HEK293 (cell line): ENCODE measurements at regions of chr10 and their contacts with region 1.

Region 1: DNA sequence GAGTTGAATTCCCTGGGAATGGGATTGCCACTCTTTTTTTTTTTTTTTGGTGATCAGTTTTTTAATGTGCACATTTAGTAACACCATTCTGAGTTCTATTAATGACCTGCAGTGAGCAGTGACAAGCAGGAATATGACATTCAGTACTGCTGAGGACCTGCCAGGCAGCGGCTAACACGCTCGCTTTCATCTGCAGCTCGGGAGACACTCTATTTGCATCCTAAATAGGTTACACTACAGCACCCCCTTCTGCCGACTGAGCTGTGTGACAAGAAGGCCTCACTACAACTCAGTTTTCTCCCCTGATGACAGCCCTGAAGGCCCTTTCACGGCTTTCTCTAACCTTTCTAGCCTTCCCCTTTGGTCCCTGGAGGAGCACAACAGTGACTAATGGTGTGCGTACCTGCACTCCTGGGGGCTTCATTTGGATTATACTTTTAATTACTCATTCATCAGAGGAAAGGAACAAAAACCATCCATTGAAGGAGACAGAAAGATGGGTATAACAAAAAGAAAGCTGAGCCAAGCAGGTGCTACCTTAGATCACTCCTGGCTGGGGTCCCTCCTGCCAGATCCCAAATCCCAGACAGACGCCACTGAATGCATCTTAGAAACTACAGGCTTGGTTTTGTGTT is 872.4 kb downstream of the LRMDA start:
- H3K4me3 ChIP-seq: no peak overlapping the region
- H3K27ac ChIP-seq: no peak overlapping the region
- H3K4me1 ChIP-seq: peaks cover 7% of the 10 kb centered on the region
- CTCF ChIP-seq: peak; percentile 54; the same call in 1 of the 2 replicates

Region 2: GRCh38 chr10:76106611-76107010 is 197.2 kb before region 1 on chr10:
- CTCF ChIA-PET with region 1: interaction called, 11 read pairs
- POLR2A ChIA-PET with region 1: no interaction called
- H3K4me3 ChIP-seq: no peak overlapping the region
- H3K27ac ChIP-seq: no peak overlapping the region
- H3K4me1 ChIP-seq: peaks cover 7% of the 10 kb centered on the region
- CTCF ChIP-seq: no peak

Region 3: DNA sequence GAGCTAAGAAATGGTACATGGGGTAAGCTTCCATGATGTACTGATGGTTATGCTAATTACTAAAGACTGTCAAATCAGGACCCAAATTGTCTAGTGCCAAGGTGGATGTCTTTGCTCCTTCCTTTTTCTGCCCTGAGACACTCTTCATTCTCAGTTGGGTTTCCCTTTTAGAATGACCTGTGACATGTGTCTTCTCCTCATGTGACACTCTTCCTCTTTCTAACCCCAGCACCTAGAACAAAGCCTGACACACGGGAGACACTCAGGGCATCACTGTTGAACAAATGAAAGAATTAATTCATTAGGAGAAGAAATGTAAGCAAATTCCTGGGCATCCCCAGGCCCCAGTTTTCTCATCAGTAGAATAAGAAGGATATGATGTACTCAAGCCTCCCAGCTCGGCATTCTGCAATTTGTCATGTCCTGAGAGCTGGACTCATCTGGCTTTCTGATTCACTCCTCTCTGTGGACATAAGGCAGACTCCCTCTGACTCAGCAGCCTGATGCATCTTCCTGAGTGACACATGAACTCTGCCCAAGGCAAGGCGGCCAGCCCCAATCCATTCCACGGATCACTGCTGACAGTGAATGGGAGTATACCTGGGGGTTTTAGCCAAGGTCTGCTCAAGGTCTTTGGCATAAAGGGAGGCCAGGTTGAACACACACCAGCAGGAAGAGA is 860.0 kb after region 1 on chr10:
- CTCF ChIA-PET with region 1: no interaction called
- POLR2A ChIA-PET with region 1: no interaction called
- H3K4me3 ChIP-seq: no peak overlapping the region
- H3K27ac ChIP-seq: no peak overlapping the region
- H3K4me1 ChIP-seq: peaks cover 4% of the 10 kb centered on the region; the same call in 1 of the 2 replicates
- CTCF ChIP-seq: no peak